ENCODE measurements at regions of chr3 and their contacts with region 1.

Region 1: GRCh38 chr3:12891985-12892839 is 50.8 kb upstream of the RPL32 start:
- DNase-seq: peak; percentile 76

Region 2: GRCh38 chr3:12994607-12995388 is 102.6 kb after region 1 on chr3:
- in situ Hi-C with region 1: loop called (anchors 25 kb)
- DNase-seq: peak; percentile 84

Region 3: DNA sequence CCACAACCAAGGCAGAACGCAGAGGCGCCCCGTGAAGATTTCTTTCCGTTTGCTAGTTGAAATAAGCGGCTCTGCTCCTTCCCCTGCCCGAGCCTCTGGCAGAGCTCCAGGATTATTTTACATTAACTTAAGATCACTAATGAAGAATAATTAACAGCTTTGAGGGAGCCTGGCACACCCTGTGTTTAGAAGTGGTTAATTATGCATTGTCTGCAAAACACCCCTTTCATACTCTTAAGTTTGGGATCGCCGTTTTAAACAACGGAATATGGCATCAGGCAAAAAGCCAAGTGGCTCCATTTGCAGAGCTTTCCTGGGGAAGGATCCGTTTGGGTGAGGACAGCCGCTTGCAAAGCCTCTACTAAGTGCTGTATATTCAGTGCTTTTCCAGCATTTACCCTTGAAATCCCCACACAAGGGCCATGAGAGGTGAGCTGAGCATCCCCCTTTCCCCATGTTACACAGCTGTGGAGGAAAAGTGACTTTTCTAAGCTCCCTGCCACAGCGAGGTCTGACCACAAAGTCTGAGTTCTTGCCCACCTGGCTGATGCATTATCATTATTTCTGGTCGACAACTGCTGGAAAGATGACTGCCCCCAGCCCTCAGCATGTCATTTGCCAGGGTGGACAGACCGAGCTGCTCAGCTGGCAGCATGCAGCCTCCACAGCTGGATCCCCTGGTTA is 147.1 kb after region 1 on chr3:
- in situ Hi-C with region 1: no loop called
- DNase-seq: no peak